Naive thymus-derived CD4-positive, alpha-beta T cell (primary cell): ENCODE measurements at regions of chr10 and their contacts with region 1.

Region 1: DNA sequence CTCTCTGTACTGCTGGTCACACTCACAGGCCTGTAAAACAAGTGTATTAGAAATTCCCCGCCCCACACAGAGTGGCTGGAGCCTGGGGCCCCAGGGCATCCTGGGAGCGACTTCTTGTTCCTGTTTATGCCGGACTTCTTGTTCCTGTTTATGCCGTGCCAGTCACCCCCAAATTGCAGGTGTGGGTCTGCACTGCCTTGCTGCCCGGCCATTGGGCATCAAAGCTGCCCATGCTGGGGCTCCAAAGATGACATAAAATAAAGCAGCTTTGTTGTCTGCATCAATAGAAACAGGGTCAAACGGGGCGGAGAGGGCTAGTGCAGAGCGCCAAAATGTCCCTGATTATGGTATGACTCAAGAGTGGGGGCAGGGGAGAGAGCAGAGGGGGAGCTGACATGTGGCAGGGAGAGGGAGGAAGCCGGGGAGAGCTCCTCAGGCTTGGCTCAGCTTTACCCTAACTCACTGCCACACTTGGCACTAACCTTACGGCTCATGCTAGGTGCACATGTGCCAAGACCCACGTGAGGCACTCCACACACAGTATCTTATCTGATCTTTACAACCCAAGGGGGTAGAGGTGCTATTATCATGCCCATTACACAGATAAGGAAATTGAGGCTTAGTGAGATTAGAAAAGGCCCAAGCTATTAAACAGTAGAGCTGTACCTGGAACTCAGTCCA is 98.4 kb downstream of the PIP4K2A start:
- DNase-seq: no peak
- ATAC-seq: peak; percentile 45
- H3K4me3 ChIP-seq: peak overlapping the region; percentile 38
- H3K4me3 Mint-ChIP-seq: peak overlapping the region; percentile 5 to 72 (median 26)
- H3K27ac ChIP-seq: peak overlapping the region; percentile 16
- H3K27ac Mint-ChIP-seq: peak overlapping the region; percentile 26 to 94 (median 75)
- H3K4me1 ChIP-seq: peaks cover 77 to 98% of the 10 kb centered on the region in 2 donors
- H3K4me1 Mint-ChIP-seq: peaks cover 75 to 100% (median 96%) of the 10 kb centered on the region in 7 donors
- H3K27me3 ChIP-seq: no peaks in the 10 kb centered on the region
- H3K27me3 Mint-ChIP-seq: no peaks in the 10 kb centered on the region

Region 2: GRCh38 chr10:22003079-22003913 is 612.7 kb before region 1 on chr10 and contains the start of gene DNAJC1:
- CTCF ChIA-PET with region 1: interaction called, 3 read pairs
- POLR2A ChIA-PET with region 1: no interaction called
- intact Hi-C with region 1: loop called (anchors 1 to 2 kb)
- DNase-seq: peak; percentile 94 to 99 (median 97)
- ATAC-seq: peak; percentile 97
- H3K4me3 ChIP-seq: peak within 1 kb of the TSS; percentile 87
- H3K4me3 Mint-ChIP-seq: peak within 1 kb of the TSS; percentile 81 to 99 (median 94)
- H3K27ac ChIP-seq: peak within 1 kb of the TSS; percentile 82
- H3K27ac Mint-ChIP-seq: peak within 1 kb of the TSS; percentile 78 to 94 (median 92)
- H3K4me1 ChIP-seq: peaks cover 18 to 19% of the 10 kb centered on the region in 2 donors
- H3K4me1 Mint-ChIP-seq: peaks cover 7 to 42% (median 29%) of the 10 kb centered on the region in 7 donors
- H3K27me3 ChIP-seq: no peaks in the 10 kb centered on the region
- H3K27me3 Mint-ChIP-seq: peaks cover 0 to 15% (median 4%) of the 10 kb centered on the region in 5 donors
- total RNA-seq, gene DNAJC1: 11.0 to 23.9 (median 12.1) TPM

Region 3: DNA sequence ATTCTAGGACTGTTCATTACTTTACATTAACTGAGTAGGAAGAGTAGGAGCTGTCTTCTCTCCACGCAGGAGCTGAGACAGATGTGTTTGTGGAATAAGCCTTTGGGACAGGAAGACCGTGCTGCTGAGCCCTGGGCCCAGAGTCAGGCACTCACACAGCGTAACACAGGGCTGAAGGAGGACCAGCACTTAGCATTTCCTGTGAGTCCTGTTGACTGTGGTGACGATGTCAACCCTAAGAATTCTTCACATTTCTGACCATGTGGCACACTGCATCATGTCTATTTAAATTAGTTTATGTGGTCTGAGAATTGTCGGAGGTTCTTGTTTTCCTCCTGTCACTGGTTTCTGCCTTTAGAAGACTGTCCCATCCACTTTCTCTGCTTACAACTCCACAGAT is 18.8 kb before region 1 on chr10:
- CTCF ChIA-PET with region 1: interaction called, 4 read pairs
- POLR2A ChIA-PET with region 1: interaction called, 13 read pairs
- intact Hi-C with region 1: loop called in 1 of 2 experiments (anchors 2 kb)
- DNase-seq: no peak
- ATAC-seq: peak; percentile 90
- H3K4me3 ChIP-seq: no peak overlapping the region
- H3K4me3 Mint-ChIP-seq: peak overlapping the region in 5 of 10 donors; percentile 6 to 60 (median 20)
- H3K27ac ChIP-seq: no peak overlapping the region
- H3K27ac Mint-ChIP-seq: peak overlapping the region in 8 of 9 donors; percentile 42 to 77 (median 59)
- H3K4me1 ChIP-seq: peaks cover 34 to 66% of the 10 kb centered on the region in 2 donors
- H3K4me1 Mint-ChIP-seq: peaks cover 57 to 90% (median 78%) of the 10 kb centered on the region in 7 donors
- H3K27me3 ChIP-seq: no peaks in the 10 kb centered on the region
- H3K27me3 Mint-ChIP-seq: no peaks in the 10 kb centered on the region

Region 4: GRCh38 chr10:22630234-22631174 is 14.5 kb after region 1 on chr10:
- CTCF ChIA-PET with region 1: interaction called, 4 read pairs
- POLR2A ChIA-PET with region 1: interaction called, 31 read pairs
- intact Hi-C with region 1: loop called (anchors 1 kb)
- DNase-seq: peak in 6 of 9 donors; percentile 27 to 73 (median 38)
- ATAC-seq: peak; percentile 89
- H3K4me3 ChIP-seq: peak overlapping the region; percentile 37
- H3K4me3 Mint-ChIP-seq: peak overlapping the region; percentile 3 to 85 (median 72)
- H3K27ac ChIP-seq: peak overlapping the region; percentile 68
- H3K27ac Mint-ChIP-seq: peak overlapping the region; percentile 68 to 98 (median 90)
- H3K4me1 ChIP-seq: peaks cover 66 to 97% of the 10 kb centered on the region in 2 donors
- H3K4me1 Mint-ChIP-seq: peaks cover 65 to 100% (median 98%) of the 10 kb centered on the region in 7 donors
- H3K27me3 ChIP-seq: no peaks in the 10 kb centered on the region
- H3K27me3 Mint-ChIP-seq: no peaks in the 10 kb centered on the region

Region 5: DNA sequence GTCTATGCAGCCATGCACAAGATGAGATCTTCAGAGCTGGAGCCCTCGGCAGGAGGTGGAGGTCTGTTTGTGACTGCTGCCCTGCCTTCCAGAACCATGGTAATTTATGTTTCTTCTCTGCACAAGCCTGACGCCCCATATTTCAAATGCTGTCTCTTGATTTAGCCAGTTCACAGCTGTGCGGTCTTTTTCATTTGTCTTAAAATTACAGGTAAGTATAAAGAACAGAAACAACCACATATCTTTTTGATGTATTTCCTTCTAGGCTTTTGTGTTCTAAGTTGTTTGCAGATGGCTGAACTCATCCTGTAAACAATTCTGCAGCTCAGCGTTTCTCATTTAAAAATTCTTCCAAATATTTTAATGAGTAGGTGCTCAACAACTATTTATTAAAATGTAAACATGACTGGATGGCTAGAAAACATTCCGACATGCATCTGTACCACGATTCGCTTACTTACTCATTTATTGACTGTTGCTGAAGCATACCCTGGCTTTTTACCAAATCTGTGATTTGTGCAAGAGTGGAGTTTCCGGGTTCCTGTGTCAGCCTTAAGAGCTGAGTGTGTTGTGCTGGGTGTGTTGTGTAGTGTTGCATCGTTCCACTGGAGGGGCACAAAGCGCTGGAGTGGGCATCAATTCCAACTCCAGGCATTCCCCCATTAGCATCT is 39.5 kb after region 1 on chr10:
- CTCF ChIA-PET with region 1: interaction called, 6 read pairs
- POLR2A ChIA-PET with region 1: interaction called, 24 read pairs
- intact Hi-C with region 1: loop called in 1 of 2 experiments (anchors 1 kb)
- DNase-seq: peak in 7 of 9 donors; percentile 69 to 90 (median 86)
- ATAC-seq: peak; percentile 89
- H3K4me3 ChIP-seq: peak overlapping the region; percentile 23
- H3K4me3 Mint-ChIP-seq: peak overlapping the region; percentile 67 to 87 (median 81)
- H3K27ac ChIP-seq: peak overlapping the region; percentile 54
- H3K27ac Mint-ChIP-seq: peak overlapping the region; percentile 82 to 97 (median 92)
- H3K4me1 ChIP-seq: peaks cover 84 to 88% of the 10 kb centered on the region in 2 donors
- H3K4me1 Mint-ChIP-seq: peaks cover 84 to 100% (median 90%) of the 10 kb centered on the region in 7 donors
- H3K27me3 ChIP-seq: no peaks in the 10 kb centered on the region
- H3K27me3 Mint-ChIP-seq: no peaks in the 10 kb centered on the region

Region 6: GRCh38 chr10:22682237-22683139 is 66.5 kb after region 1 on chr10:
- CTCF ChIA-PET with region 1: no interaction called
- POLR2A ChIA-PET with region 1: interaction called, 8 read pairs
- intact Hi-C with region 1: loop called (anchors 1 kb)
- DNase-seq: peak in 8 of 9 donors; percentile 43 to 81 (median 75)
- ATAC-seq: peak; percentile 79
- H3K4me3 ChIP-seq: peak overlapping the region; percentile 36
- H3K4me3 Mint-ChIP-seq: peak overlapping the region; percentile 67 to 94 (median 80)
- H3K27ac ChIP-seq: peak overlapping the region; percentile 73
- H3K27ac Mint-ChIP-seq: peak overlapping the region; percentile 90 to 100 (median 95)
- H3K4me1 ChIP-seq: peaks cover 86 to 94% of the 10 kb centered on the region in 2 donors
- H3K4me1 Mint-ChIP-seq: peaks cover 64 to 99% (median 91%) of the 10 kb centered on the region in 7 donors
- H3K27me3 ChIP-seq: no peaks in the 10 kb centered on the region
- H3K27me3 Mint-ChIP-seq: no peaks in the 10 kb centered on the region